ENCODE measurements at regions of chr6 and their contacts with region 1.

Region 1: GRCh38 chr6:110958329-110959192 is at the start of gene GTF3C6:
- DNase-seq: peak; percentile 97
- total RNA-seq, gene GTF3C6: 96.6 TPM

Region 2: DNA sequence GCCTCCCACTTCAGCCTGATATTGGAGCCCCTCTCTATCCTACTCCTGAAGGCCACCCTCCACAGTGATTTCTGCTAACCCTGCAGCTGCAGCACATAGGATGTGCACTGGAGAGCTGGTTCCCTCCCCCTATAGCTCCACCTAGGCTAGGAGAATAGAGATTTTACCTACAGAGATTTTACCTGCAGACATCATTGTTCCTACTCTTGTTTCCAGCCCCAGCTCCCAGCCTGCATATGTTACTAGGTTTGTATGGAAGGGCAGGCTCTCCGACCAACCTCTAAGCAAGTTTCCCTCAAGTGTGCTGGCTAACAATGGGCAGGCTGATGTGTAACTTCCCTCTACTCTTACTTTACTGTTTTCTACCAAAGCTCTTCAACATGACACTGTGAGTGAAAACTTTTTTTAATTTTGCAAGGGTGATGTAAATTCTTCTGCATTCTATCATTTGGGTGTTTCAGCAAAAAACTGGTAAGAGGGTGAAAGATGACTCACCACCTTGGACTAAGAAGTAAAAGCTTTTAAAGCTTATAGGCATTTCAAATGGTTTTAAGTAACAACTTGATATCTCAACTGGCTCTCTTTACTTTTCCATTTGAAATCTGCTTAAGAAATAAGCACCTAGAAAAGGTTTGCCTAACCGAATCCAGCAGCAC is 250.1 kb before region 1 on chr6:
- intact Hi-C with region 1: no loop called
- DNase-seq: no peak

Region 3: GRCh38 chr6:110981202-110981600 is 22.6 kb after region 1 on chr6:
- intact Hi-C with region 1: loop called (anchors 2 kb)
- DNase-seq: no peak

Measured in cardiac septum (tissue), 1 donor.